PC-3 (cell line): ENCODE measurements at regions of chr19 and their contacts with region 1.

Region 1: GRCh38 chr19:18603255-18603957 is 3.2 kb downstream of the CRLF1 start:
- DNase-seq: peak; percentile 15
- ATAC-seq: peak; percentile 60
- H3K4me3 ChIP-seq: no peak overlapping the region
- H3K27ac ChIP-seq: no peak overlapping the region
- H3K4me1 ChIP-seq: no peaks in the 10 kb centered on the region; the same call in 1 of the 2 replicates
- H3K27me3 ChIP-seq: peaks cover 36% of the 10 kb centered on the region
- CTCF ChIP-seq: peak; percentile 25; the same call in 1 of the 2 replicates

Region 2: GRCh38 chr19:18503971-18504885 is 99.2 kb before region 1 on chr19:
- CTCF ChIA-PET with region 1: no interaction called
- POLR2A ChIA-PET with region 1: no interaction called
- intact Hi-C with region 1: no loop called
- DNase-seq: peak; percentile 15
- ATAC-seq: peak; percentile 19; the same call in 1 of the 2 replicates
- H3K4me3 ChIP-seq: no peak overlapping the region
- H3K27ac ChIP-seq: no peak overlapping the region
- H3K4me1 ChIP-seq: peaks cover 16% of the 10 kb centered on the region; the same call in 1 of the 2 replicates
- H3K27me3 ChIP-seq: no peaks in the 10 kb centered on the region
- CTCF ChIP-seq: no peak

Region 3: GRCh38 chr19:18771328-18772242 is 168.2 kb after region 1 on chr19:
- CTCF ChIA-PET with region 1: no interaction called
- POLR2A ChIA-PET with region 1: no interaction called
- intact Hi-C with region 1: loop called (anchors 10 kb)
- DNase-seq: peak; percentile 23
- ATAC-seq: peak; percentile 30; the same call in 1 of the 2 replicates
- H3K4me3 ChIP-seq: no peak overlapping the region
- H3K27ac ChIP-seq: no peak overlapping the region
- H3K4me1 ChIP-seq: peaks cover 12% of the 10 kb centered on the region
- H3K27me3 ChIP-seq: no peaks in the 10 kb centered on the region
- CTCF ChIP-seq: peak; percentile 43; the same call in 1 of the 2 replicates